ENCODE measurements at regions of chr19 and their contacts with region 1.

Region 1: GRCh38 chr19:48965040-48965805 is at the start of gene FTL:
- DNase-seq: peak; percentile 100
- H3K4me3 ChIP-seq: peak within 1 kb of the TSS; percentile 72 to 94 (median 76)
- H3K27ac ChIP-seq: peak within 1 kb of the TSS; percentile 92 to 94 (median 93)
- H3K4me1 ChIP-seq: peaks cover 53 to 66% (median 60%) of the 10 kb centered on the region in 4 donors
- H3K27me3 ChIP-seq: no peaks in the 10 kb centered on the region
- CTCF ChIP-seq: no peak
- EP300 ChIP-seq: no peak
- POLR2A ChIP-seq: peak; percentile 100
- total RNA-seq, gene FTL: 3,246 to 4,339 (median 3,896) TPM

Region 2: GRCh38 chr19:48872182-48872883 is 92.9 kb before region 1 on chr19 and contains the start of gene PPP1R15A:
- intact Hi-C with region 1: loop called (anchors 5 kb)
- DNase-seq: peak; percentile 100
- H3K4me3 ChIP-seq: peak within 1 kb of the TSS; percentile 64 to 95 (median 80)
- H3K27ac ChIP-seq: peak within 1 kb of the TSS; percentile 94 to 100 (median 98)
- H3K4me1 ChIP-seq: peaks cover 41 to 66% (median 65%) of the 10 kb centered on the region in 4 donors
- H3K27me3 ChIP-seq: no peaks in the 10 kb centered on the region
- CTCF ChIP-seq: peak in 2 of 3 experiments; percentile 26 to 35
- EP300 ChIP-seq: no peak
- POLR2A ChIP-seq: peak; percentile 99
- total RNA-seq, gene PPP1R15A: 40.3 to 98.7 (median 64.4) TPM

Measured in esophagus muscularis mucosa (tissue), 4 donors.